Natural killer cell (primary cell): ENCODE measurements at regions of chr1 and their contacts with region 1.

Region 1: DNA sequence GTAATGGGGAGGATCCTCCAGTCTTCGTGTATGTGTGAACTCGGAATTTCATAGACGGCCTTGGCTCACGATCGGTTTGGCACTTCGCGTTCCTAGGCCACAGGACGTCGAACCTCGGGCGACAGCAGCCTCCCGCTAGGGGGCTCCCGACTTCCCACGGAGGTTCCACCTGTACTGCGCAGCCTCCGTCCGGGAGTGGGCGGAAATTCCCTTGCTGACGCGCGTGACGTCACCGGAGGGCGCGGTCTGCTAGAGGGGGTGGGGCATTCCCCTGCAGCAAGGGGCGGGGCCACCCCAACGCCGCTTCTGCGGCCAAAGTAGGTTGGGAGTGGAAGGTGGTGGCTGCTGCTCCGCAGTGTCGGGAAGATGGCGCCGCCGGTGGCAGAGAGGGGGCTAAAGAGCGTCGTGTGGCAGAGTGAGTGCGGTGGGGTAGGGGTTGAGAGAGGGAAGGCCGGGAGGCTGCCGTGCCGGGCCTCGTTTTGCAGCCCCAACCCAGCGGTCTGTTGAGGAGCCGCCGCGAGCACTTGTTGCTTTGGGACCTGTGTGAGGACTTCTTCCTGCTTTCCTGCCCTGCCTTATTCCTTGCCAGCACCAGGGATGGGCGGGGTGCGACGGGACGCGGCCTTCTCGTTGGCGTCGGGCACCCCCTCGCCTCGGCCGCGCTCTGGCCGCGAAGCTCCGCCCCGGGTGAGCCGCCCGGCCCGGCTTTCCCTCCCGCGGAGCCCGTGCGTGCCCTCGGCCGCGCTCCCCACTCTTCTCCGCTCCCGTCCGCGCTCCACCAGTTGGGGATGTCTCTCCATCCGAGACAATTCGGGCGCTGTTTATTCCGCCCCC is at the start of gene STXBP3:
- DNase-seq: peak; percentile 100
- ATAC-seq: peak; percentile 90 to 97 (median 91)
- H3K4me3 ChIP-seq: peak within 1 kb of the TSS; percentile 98
- H3K4me3 Mint-ChIP-seq: peak within 1 kb of the TSS; percentile 100
- H3K27ac ChIP-seq: peak within 1 kb of the TSS; percentile 99
- H3K27ac Mint-ChIP-seq: peak within 1 kb of the TSS; percentile 97 to 100
- H3K4me1 ChIP-seq: peaks cover 13% of the 10 kb centered on the region
- H3K4me1 Mint-ChIP-seq: peaks cover 36 to 37% of the 10 kb centered on the region in 2 donors
- H3K27me3 ChIP-seq: no peaks in the 10 kb centered on the region
- H3K27me3 Mint-ChIP-seq: peaks cover 3 to 6% of the 10 kb centered on the region in 2 donors
- CTCF ChIP-seq: peak; percentile 88
- total RNA-seq, gene STXBP3: 63.1 to 71.4 (median 69.2) TPM

Region 2: GRCh38 chr1:108708691-108709660 is 37.6 kb before region 1 on chr1:
- intact Hi-C with region 1: no loop called
- DNase-seq: peak; percentile 48 to 81
- ATAC-seq: peak; percentile 72 to 90 (median 87)
- H3K4me3 ChIP-seq: no peak overlapping the region
- H3K4me3 Mint-ChIP-seq: no peak overlapping the region
- H3K27ac ChIP-seq: no peak overlapping the region
- H3K27ac Mint-ChIP-seq: peak overlapping the region in 1 of 2 donors; percentile 35
- H3K4me1 ChIP-seq: peaks cover 11% of the 10 kb centered on the region
- H3K4me1 Mint-ChIP-seq: peaks cover 17 to 25% of the 10 kb centered on the region in 2 donors
- H3K27me3 ChIP-seq: no peaks in the 10 kb centered on the region
- H3K27me3 Mint-ChIP-seq: no peaks in the 10 kb centered on the region
- CTCF ChIP-seq: peak; percentile 53

Region 3: DNA sequence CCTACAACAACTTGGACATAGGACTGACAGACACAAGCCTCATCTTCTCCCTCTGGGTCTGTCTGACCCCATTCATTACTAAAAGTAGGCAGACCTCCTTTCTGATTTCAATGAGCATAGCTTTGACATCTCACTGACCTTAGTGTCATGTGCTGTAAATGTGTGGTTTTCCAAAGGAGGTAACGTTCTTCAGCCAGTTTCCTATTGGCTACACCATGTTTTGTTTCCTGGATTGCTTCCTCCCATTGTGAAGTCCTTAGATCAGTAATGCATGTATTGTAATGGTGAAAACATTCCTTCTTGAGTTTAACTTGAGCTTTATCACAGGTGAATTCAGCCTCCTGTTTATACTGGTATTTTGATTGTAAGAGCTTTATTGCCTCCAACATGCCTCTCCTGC is 20.5 kb after region 1 on chr1:
- intact Hi-C with region 1: no loop called
- DNase-seq: no peak
- ATAC-seq: no peak
- H3K4me3 ChIP-seq: no peak overlapping the region
- H3K4me3 Mint-ChIP-seq: no peak overlapping the region
- H3K27ac ChIP-seq: no peak overlapping the region
- H3K27ac Mint-ChIP-seq: no peak overlapping the region
- H3K4me1 ChIP-seq: no peaks in the 10 kb centered on the region
- H3K4me1 Mint-ChIP-seq: peaks cover 5 to 6% of the 10 kb centered on the region in 2 donors
- H3K27me3 ChIP-seq: no peaks in the 10 kb centered on the region
- H3K27me3 Mint-ChIP-seq: no peaks in the 10 kb centered on the region
- CTCF ChIP-seq: no peak

Region 4: GRCh38 chr1:109090196-109091077 is 343.8 kb after region 1 on chr1 and contains the start of gene TMEM167B:
- intact Hi-C with region 1: loop called (anchors 5 kb)
- DNase-seq: peak; percentile 81 to 93
- ATAC-seq: peak; percentile 93 to 98 (median 94)
- H3K4me3 ChIP-seq: peak within 1 kb of the TSS; percentile 91
- H3K4me3 Mint-ChIP-seq: peak within 1 kb of the TSS; percentile 93
- H3K27ac ChIP-seq: peak within 1 kb of the TSS; percentile 97
- H3K27ac Mint-ChIP-seq: peak within 1 kb of the TSS; percentile 94 to 96
- H3K4me1 ChIP-seq: peaks cover 20% of the 10 kb centered on the region
- H3K4me1 Mint-ChIP-seq: peaks cover 28% of the 10 kb centered on the region in 2 donors
- H3K27me3 ChIP-seq: no peaks in the 10 kb centered on the region
- H3K27me3 Mint-ChIP-seq: no peaks in the 10 kb centered on the region
- CTCF ChIP-seq: no peak
- total RNA-seq, gene TMEM167B: 61.2 to 73.0 (median 71.8) TPM